ENCODE measurements at regions of chr10 and their contacts with region 1.

Region 1: DNA sequence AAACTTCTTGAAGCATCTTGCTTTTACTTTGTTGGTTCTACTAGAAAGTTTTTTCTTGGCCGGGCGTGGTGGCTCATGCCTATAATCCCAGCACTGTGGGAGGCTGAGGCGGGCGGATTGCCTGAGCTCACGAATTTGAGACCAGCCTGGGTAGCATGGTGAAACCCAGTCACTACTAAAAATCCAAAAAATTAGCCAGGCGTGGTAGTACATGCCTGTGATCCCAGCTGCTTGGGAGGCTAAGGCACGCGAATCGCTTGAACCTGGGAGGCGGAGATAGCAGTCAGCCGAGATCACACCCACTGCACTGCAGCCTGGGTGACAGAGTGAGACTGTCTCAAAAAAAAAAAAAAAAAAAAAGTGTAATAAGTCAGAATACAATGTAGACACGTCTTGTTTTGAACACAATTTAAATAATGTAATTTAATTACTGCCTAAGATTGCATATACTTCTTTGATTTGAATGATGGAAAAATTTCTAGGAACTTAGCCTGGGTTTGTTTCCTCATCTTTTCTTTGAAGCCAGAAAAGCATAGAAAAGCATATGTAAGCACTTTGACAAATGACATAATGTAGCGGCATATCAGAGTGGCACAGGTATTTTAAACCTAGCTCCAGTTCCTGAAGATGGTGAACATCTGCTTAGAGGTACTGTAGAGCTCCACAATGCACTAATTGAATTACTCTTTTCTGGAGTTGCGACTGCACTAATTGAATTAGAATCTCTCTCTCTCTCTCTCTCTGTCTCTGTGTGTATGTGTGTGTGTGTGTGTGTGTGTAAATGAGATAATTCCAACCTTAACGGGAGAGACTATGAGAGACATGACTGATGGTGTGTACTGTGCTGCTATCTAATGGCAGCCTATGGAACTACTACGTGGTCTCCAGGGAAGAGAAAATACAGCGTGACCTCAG is 87.8 kb downstream of the BTRC start:
- DNase-seq: peak; percentile 30
- H3K4me3 ChIP-seq: no peak overlapping the region
- H3K27ac ChIP-seq: no peak overlapping the region
- H3K27me3 ChIP-seq: no peaks in the 10 kb centered on the region
- CTCF ChIP-seq: peak; percentile 74

Region 2: DNA sequence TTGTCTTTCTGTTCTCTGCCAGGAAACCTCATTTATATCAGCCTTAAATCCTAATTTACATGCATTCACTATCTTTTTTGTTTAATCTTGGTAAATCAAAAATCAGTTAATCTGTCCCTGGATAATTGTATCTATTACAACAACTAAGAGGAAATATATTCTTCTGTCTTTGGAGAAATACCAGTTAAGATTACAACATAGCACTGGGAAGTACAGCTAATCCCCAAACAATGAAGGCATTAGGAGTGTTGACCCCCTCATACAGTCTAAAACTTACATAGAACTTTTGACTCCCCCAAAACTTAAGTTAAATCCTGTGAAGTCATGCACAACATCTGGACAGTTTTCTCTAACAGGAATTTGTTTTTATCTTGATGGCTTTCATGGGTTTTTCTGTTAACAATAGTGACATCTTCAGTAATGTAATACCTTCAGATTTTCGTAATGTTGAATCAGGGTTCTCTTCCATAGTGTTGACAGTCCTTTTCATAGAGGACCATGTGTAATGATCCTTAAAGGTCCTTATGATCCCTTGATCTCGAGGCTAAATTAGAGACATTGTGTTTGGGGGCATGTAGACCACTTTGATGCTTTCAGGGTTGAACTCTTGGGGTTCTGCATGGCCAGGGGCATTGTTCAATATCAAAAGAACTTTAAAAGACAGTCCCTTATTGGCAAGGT is 1683.4 kb before region 1 on chr10:
- CTCF ChIA-PET with region 1: no interaction called
- POLR2A ChIA-PET with region 1: no interaction called
- DNase-seq: no peak
- H3K4me3 ChIP-seq: no peak overlapping the region
- H3K27ac ChIP-seq: no peak overlapping the region
- H3K27me3 ChIP-seq: no peaks in the 10 kb centered on the region
- CTCF ChIP-seq: no peak

Region 3: DNA sequence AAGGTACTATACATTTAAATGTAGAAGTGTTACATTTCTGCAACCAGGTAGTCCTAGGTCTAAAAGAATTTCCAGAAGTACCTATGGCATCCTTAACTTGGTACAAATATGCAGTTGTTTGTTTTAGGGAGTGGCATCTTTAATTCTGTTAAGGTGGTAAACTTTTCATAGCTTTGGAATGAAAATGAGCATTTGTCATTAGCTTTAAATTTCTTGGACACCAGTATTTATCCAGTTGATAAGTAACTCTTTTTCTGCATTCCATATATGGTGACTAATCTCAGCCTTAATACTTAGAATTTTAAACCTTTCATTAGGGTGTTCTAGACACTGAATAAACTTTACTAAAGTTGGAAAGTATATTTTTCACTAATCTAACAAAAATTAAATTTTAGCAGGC is 518.2 kb before region 1 on chr10:
- CTCF ChIA-PET with region 1: no interaction called
- POLR2A ChIA-PET with region 1: no interaction called
- DNase-seq: no peak
- H3K4me3 ChIP-seq: no peak overlapping the region
- H3K27ac ChIP-seq: no peak overlapping the region
- H3K27me3 ChIP-seq: no peaks in the 10 kb centered on the region
- CTCF ChIP-seq: no peak

Region 4: DNA sequence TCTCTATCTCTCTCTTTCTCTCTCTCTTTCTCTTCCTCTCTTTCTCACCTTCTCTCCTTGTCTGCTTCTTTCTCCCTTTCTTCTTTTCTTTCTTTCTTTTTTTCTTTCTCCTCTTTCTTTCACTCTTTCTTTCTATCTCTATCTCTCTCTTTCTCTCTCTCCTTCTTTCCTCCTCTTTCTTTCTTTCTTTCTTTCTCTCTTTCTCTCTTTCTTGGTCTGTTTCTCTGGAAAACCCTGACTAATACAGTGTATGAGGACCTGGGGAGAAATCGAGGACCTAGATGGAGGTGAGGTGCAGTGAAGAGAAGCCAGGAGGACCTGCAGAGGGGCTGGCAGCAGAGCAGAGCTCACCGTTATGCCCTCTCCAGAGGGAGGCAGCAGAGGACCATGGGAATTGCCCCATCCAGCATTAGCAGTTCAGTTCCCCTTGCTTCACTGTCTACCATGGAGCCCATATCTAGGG is 140.5 kb before region 1 on chr10:
- CTCF ChIA-PET with region 1: interaction called, 12 read pairs
- POLR2A ChIA-PET with region 1: no interaction called
- DNase-seq: peak; percentile 13
- H3K4me3 ChIP-seq: no peak overlapping the region
- H3K27ac ChIP-seq: no peak overlapping the region
- H3K27me3 ChIP-seq: peaks cover 73% of the 10 kb centered on the region
- CTCF ChIP-seq: peak; percentile 60

Region 5: GRCh38 chr10:101453791-101454718 is 12.3 kb after region 1 on chr10:
- CTCF ChIA-PET with region 1: interaction called, 13 read pairs
- POLR2A ChIA-PET with region 1: no interaction called
- DNase-seq: no peak
- H3K4me3 ChIP-seq: no peak overlapping the region
- H3K27ac ChIP-seq: no peak overlapping the region
- H3K27me3 ChIP-seq: no peaks in the 10 kb centered on the region
- CTCF ChIP-seq: no peak

Region 6: GRCh38 chr10:101660256-101660655 is 218.5 kb after region 1 on chr10:
- CTCF ChIA-PET with region 1: no interaction called
- POLR2A ChIA-PET with region 1: no interaction called
- DNase-seq: no peak
- H3K4me3 ChIP-seq: no peak overlapping the region
- H3K27ac ChIP-seq: no peak overlapping the region
- H3K27me3 ChIP-seq: no peaks in the 10 kb centered on the region
- CTCF ChIP-seq: no peak